ENCODE measurements at regions of chr11 and their contacts with region 1.

Region 1: DNA sequence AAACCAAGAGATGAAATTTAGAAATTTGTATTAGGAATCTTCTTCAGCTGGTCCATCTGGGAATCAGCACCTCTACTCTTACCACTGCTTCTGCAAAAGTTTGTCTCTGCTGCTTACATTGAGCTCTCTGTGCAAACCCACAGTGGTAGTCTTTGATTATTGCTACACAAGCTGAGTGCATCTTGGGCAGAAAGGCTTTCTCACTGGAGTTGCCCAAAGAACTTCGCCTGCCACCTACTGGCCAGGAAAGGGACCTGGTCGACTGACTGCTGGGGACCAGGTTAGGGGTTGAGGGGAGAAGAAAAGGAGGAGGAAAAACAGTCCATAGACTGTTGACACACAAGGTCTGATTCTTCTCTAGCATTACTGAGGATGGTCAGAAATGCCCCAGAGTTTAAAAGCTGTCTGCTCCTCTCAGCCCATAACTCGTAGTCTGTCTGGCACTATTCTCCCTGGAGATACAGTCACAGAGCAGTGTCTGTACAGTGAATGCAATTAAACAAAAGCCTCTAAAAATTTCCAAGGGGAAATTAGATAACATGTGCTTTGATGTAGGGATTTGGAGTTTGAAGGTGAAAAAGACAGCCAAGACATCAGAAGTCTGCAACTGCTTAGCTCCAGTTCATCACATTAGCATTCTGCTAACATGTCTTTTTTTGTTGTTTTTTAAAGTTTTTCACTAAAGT is 215.0 kb upstream of the CTSC start:
- DNase-seq: peak; percentile 37
- H3K4me3 Mint-ChIP-seq: no peak overlapping the region
- H3K27ac Mint-ChIP-seq: no peak overlapping the region
- H3K4me1 Mint-ChIP-seq: peaks cover 5% of the 10 kb centered on the region
- H3K27me3 Mint-ChIP-seq: peaks cover 8% of the 10 kb centered on the region

Region 2: GRCh38 chr11:88886796-88887195 is 334.3 kb after region 1 on chr11:
- intact Hi-C with region 1: loop called (anchors 2 kb)
- DNase-seq: peak; percentile 8
- H3K4me3 Mint-ChIP-seq: no peak overlapping the region
- H3K27ac Mint-ChIP-seq: no peak overlapping the region
- H3K4me1 Mint-ChIP-seq: no peaks in the 10 kb centered on the region
- H3K27me3 Mint-ChIP-seq: no peaks in the 10 kb centered on the region